ENCODE measurements at regions of chr7 and their contacts with region 1.

Region 1: DNA sequence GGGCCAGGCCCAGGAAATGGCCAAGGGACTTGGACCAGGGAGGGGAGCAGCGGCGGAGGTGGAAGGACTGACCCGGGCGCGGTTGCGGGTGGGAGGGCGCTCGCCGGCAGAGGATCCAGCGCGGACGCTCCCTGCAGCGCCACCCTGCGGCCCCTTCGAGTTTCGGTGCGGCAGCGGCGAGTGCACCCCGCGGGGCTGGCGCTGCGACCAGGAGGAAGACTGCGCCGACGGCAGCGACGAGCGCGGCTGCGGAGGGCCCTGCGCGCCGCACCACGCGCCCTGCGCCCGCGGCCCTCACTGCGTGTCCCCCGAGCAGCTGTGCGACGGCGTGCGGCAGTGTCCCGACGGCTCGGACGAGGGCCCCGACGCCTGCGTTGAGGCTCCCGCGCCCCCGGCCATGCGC is 16.8 kb upstream of the ZNF467 start:
- DNase-seq: peak; percentile 78
- ATAC-seq: peak; percentile 68
- H3K4me3 Mint-ChIP-seq: peak overlapping the region; percentile 64
- H3K27ac Mint-ChIP-seq: no peak overlapping the region
- H3K4me1 Mint-ChIP-seq: peaks cover 7% of the 10 kb centered on the region; the same call in 1 of the 2 replicates
- H3K27me3 Mint-ChIP-seq: peaks cover 47% of the 10 kb centered on the region
- CTCF ChIP-seq: peak; percentile 60

Region 2: GRCh38 chr7:149771721-149772240 is 18.4 kb before region 1 on chr7:
- CTCF ChIA-PET with region 1: interaction called, 33 read pairs
- POLR2A ChIA-PET with region 1: no interaction called
- DNase-seq: peak; percentile 91
- ATAC-seq: peak; percentile 86
- H3K4me3 Mint-ChIP-seq: peak overlapping the region; percentile 68
- H3K27ac Mint-ChIP-seq: no peak overlapping the region
- H3K4me1 Mint-ChIP-seq: peaks cover 15% of the 10 kb centered on the region
- H3K27me3 Mint-ChIP-seq: peaks cover 72% of the 10 kb centered on the region
- CTCF ChIP-seq: no peak